ENCODE measurements at regions of chr12 and their contacts with region 1.

Region 1: DNA sequence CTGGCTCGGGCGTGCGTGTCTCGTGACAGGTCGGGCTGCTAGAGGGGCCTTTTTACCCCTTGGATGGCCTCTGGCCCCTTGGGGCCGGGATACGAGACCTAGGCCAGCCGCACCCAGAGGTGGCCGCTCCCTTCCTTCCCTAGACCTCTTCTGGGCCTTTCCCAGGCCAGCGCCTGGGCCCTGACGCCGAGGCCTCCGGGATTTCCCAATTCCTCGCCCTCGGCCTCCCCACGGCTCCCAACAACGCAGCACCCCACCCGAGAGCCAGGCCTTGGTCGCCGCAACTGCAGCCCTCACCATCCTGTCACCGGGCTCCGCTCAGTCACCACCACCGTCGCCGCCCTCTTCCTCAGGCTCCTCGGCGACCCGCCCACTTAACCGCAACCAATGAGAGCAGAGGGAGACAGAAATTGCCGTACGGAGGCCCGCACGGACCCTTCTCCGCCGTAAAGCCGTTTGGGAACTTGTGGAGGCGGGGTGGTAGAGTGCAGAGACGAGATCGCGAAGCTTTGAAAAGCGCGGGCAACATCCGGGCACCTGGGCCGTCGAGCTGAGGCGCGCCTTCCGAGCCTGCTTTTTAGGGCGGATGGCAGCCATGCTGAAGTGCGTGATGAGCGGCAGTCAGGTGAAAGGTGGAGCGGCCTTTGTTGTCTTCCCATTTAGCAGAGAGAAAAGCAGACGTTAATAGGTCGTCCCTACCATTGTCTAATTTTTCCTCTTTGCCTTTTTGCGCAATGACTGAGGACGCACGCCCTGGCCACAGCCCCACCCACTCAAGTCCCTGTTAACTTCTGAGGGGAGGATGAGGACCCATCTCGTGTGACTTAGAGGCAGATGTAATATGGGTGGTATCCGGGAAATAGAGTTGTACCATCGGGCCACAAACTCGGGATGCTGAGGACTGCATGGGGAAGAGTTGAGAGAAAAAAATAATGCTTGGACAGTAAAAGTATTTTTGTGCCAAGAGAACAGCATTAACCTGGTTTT is at the starts of genes RAD9B and VPS29:
- DNase-seq: peak; percentile 99 to 100 (median 100)
- H3K4me3 ChIP-seq: peak within 1 kb of the TSS; percentile 63 to 93 (median 89)
- H3K27ac ChIP-seq: peak within 1 kb of the TSS; percentile 93 to 98
- H3K4me1 ChIP-seq: peaks cover 14 to 34% (median 28%) of the 10 kb centered on the region in 4 experiments
- H3K27me3 ChIP-seq: no peaks in the 10 kb centered on the region

Region 2: GRCh38 chr12:110449799-110450497 is 52.1 kb before region 1 on chr12 and contains the start of gene ARPC3:
- CTCF ChIA-PET with region 1: interaction called, 13 read pairs
- POLR2A ChIA-PET with region 1: interaction called, 19 read pairs
- DNase-seq: peak; percentile 96 to 98 (median 97)
- H3K4me3 ChIP-seq: peak within 1 kb of the TSS; percentile 74 to 96 (median 89)
- H3K27ac ChIP-seq: peak within 1 kb of the TSS; percentile 98 to 99
- H3K4me1 ChIP-seq: peaks cover 5 to 36% (median 23%) of the 10 kb centered on the region in 4 experiments
- H3K27me3 ChIP-seq: no peaks in the 10 kb centered on the region

Region 3: GRCh38 chr12:110468212-110469048 is 33.6 kb before region 1 on chr12 and contains the starts of genes FAM216A and GPN3:
- CTCF ChIA-PET with region 1: interaction called, 23 read pairs
- POLR2A ChIA-PET with region 1: interaction called, 3 read pairs
- DNase-seq: peak; percentile 98 to 99 (median 98)
- H3K4me3 ChIP-seq: peak within 1 kb of the TSS; percentile 74 to 97 (median 90)
- H3K27ac ChIP-seq: peak within 1 kb of the TSS; percentile 87 to 93
- H3K4me1 ChIP-seq: peaks cover 5 to 36% (median 25%) of the 10 kb centered on the region in 4 experiments
- H3K27me3 ChIP-seq: no peaks in the 10 kb centered on the region

Region 4: GRCh38 chr12:110516995-110517394 is 14.9 kb after region 1 on chr12:
- CTCF ChIA-PET with region 1: no interaction called
- POLR2A ChIA-PET with region 1: no interaction called
- DNase-seq: no peak
- H3K4me3 ChIP-seq: no peak overlapping the region
- H3K27ac ChIP-seq: no peak overlapping the region
- H3K4me1 ChIP-seq: no peaks in the 10 kb centered on the region
- H3K27me3 ChIP-seq: no peaks in the 10 kb centered on the region